ENCODE measurements at regions of chr7 and their contacts with region 1.

Region 1: GRCh38 chr7:23181684-23182553 is at the start of gene NUP42:
- DNase-seq: peak; percentile 98
- ATAC-seq: peak; percentile 98
- H3K4me3 Mint-ChIP-seq: peak within 1 kb of the TSS; percentile 88
- H3K27ac Mint-ChIP-seq: peak within 1 kb of the TSS; percentile 97
- H3K4me1 Mint-ChIP-seq: peaks cover 30% of the 10 kb centered on the region
- H3K27me3 Mint-ChIP-seq: no peaks in the 10 kb centered on the region
- total RNA-seq, gene NUP42: 32.3 to 44.8 TPM

Region 2: DNA sequence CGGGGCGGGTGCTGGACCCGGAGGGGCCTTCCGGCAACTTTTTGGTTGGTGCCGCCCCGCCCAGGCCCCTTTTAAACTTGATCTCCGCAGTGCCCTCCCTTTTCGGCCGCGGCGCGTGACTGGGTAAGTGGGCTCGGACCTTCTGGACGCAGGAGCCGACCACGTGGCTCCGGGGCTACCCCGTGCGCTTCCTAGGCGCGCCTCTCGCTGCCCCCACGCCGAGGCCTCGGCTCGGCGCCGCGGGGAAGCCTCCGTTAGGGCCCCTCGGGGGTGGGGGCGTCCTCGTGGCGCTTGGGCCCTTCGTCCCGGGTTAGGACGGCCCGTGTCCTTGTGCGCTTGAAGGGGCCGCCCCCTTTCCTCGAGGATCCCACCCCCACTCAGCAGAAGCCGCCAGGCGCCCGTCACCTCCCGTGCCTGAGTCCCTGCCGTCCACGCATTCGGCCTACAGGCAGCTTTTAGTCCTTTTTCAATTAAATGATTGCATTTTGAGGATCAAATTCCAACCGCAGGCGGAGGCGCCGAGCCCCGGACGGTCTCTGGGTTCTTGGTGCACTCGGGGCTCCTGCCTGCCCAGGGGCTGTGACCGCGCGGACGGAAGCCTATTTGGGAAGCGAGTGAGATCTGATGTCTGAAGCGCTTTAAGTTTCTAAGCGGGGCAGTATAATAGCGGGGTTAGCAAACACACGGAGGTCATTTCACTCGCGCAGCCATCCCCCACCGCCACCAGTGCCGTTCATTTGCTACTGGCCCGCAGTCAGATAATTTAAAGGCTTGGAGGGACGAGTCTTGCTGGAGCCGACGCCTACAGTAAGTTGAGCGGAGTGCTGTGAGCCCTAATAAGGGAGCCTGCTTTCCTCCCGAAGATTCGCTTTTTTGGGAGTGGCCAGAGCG is 327.5 kb before region 1 on chr7:
- CTCF ChIA-PET with region 1: no interaction called
- POLR2A ChIA-PET with region 1: no interaction called
- intact Hi-C with region 1: loop called (anchors 1 to 10 kb)
- DNase-seq: peak; percentile 89
- ATAC-seq: peak; percentile 74
- H3K4me3 Mint-ChIP-seq: peak overlapping the region; percentile 92
- H3K27ac Mint-ChIP-seq: peak overlapping the region; percentile 92
- H3K4me1 Mint-ChIP-seq: peaks cover 34% of the 10 kb centered on the region
- H3K27me3 Mint-ChIP-seq: peaks cover 2% of the 10 kb centered on the region

Region 3: DNA sequence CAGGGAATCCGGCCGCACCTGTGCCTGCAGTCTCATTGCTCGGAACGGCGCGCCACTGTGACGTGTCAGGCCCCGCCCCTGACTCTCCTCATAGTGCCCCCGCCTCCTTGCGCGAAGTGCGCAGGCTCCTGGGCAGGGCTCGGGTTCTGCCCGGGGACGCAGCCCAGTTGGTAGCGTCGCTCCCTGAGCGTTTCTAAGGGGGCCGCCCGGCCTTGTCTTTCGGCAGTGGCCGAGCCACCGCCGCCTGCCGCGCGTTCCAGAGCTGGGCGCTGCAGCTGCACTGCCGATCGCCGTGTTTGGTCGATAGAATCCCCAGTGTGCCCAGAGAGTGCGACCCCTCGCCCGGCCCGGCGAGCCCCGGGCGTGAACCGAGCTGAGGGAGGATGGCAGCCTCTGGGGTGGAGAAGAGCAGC is 76.3 kb before region 1 on chr7 and contains the start of gene KLHL7:
- CTCF ChIA-PET with region 1: interaction called, 6 read pairs
- POLR2A ChIA-PET with region 1: interaction called, 5 read pairs
- intact Hi-C with region 1: loop called (anchors 1 kb)
- DNase-seq: peak; percentile 98
- ATAC-seq: peak; percentile 98
- H3K4me3 Mint-ChIP-seq: peak within 1 kb of the TSS; percentile 97
- H3K27ac Mint-ChIP-seq: peak within 1 kb of the TSS; percentile 94
- H3K4me1 Mint-ChIP-seq: peaks cover 32% of the 10 kb centered on the region
- H3K27me3 Mint-ChIP-seq: no peaks in the 10 kb centered on the region
- total RNA-seq, gene KLHL7: 18.1 to 20.8 TPM

Region 4: GRCh38 chr7:23679898-23680413 is 498.0 kb after region 1 on chr7 and contains the start of gene FAM221A:
- CTCF ChIA-PET with region 1: interaction called, 3 read pairs
- POLR2A ChIA-PET with region 1: no interaction called
- intact Hi-C with region 1: loop called in 1 of 2 experiments (anchors 2 kb)
- DNase-seq: peak; percentile 93
- ATAC-seq: peak; percentile 98
- H3K4me3 Mint-ChIP-seq: peak within 1 kb of the TSS; percentile 85
- H3K27ac Mint-ChIP-seq: peak within 1 kb of the TSS; percentile 76
- H3K4me1 Mint-ChIP-seq: peaks cover 8% of the 10 kb centered on the region
- H3K27me3 Mint-ChIP-seq: no peaks in the 10 kb centered on the region
- total RNA-seq, gene FAM221A: 5.3 to 8.1 TPM

Measured in activated CD4-positive, alpha-beta T cell treated with anti-CD3 and anti-CD28 coated beads for 36 hours (primary cell).